ENCODE measurements at regions of chr2 and their contacts with region 1.

Region 1: GRCh38 chr2:25673300-25674076 is at the start of gene DTNB:
- DNase-seq: peak; percentile 89
- H3K4me3 ChIP-seq: peak within 1 kb of the TSS; percentile 80
- H3K27ac ChIP-seq: peak within 1 kb of the TSS; percentile 51
- H3K4me1 ChIP-seq: peaks cover 14% of the 10 kb centered on the region
- CTCF ChIP-seq: no peak
- total RNA-seq, gene DTNB: 9.3 and 16.1 TPM in 2 replicates

Region 2: DNA sequence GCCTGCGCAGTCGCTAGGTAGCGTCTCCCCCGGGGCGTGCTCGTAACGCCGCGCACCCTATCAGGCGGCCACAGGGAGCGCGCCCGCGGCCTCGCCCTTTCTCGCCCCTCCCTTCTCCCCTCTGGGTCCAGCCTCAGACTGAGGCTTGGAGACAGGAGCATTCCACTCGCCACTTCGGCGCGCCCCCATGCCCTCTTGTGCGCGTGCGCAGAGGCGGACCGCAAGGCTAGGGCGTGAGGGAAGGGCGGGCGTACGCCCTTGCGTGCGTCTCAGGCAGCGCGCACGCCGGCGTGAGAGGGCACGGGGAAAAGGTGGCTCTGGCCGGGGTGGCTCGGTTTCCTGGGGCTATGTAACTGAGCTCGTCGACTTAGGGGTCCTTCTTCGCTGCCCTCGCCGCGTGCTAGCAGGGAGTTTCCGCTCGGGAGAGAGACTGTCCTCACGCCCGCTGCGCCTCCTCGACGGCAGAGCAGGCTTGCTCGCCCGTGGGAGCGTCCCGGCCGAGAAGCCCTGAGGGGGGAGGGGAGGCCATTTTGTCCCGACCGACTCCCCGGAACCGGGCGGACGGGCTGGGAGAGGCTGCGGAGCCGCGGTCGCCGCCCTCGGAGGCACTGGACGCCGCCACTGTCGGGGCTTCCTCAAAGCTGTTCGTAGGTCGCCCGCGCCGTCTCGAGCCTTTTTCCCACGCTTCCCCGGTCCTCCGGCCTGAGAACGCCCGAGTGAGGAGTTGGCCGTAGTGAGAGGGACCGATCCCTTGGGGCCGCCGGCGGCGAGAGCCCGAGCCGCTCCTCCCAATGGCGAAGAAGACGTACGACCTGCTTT is 360.5 kb after region 1 on chr2 and contains the start of gene RAB10:
- CTCF ChIA-PET with region 1: no interaction called
- POLR2A ChIA-PET with region 1: no interaction called
- intact Hi-C with region 1: loop called (anchors 10 kb)
- DNase-seq: peak; percentile 99
- H3K4me3 ChIP-seq: peak within 1 kb of the TSS; percentile 95
- H3K27ac ChIP-seq: peak within 1 kb of the TSS; percentile 85
- H3K4me1 ChIP-seq: peaks cover 27% of the 10 kb centered on the region
- CTCF ChIP-seq: no peak
- total RNA-seq, gene RAB10: 58.3 and 109 TPM in 2 replicates

Region 3: DNA sequence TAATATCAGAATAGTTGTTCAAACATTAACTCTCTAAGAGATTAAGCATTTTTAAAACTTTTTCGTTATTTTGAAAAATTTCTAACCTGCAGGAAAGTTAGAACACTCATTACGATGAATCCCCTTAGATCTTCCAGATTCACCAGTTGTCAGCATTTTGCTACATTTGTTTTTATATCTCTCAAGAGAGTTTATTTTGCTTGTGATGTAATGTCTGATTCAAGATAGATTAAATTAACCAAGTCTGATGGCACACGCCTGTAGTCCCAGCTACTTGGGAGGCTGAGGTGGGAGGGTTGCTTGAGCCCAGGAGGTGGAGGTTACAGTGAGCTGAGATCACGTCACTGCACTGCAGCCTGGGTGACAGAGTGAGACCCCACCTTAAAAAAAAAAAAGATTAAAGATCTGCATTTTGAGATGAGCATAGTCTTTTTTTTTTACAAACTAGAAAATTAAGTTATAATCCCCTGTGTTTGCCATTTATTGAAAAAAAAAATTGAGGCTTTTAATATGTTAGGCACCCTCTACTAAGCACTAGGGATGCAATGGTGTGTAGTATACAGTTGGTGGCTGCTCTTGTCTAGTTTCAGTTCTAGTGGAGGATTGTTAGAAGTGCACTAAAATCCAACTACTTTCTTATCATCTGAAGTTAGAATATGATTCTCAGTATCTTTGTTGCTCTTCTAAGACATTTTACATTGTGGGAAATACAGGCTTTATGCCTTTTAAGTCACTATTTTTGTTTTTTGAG is 381.3 kb after region 1 on chr2:
- CTCF ChIA-PET with region 1: no interaction called
- POLR2A ChIA-PET with region 1: no interaction called
- intact Hi-C with region 1: no loop called
- DNase-seq: no peak
- H3K4me3 ChIP-seq: no peak overlapping the region
- H3K27ac ChIP-seq: no peak overlapping the region
- H3K4me1 ChIP-seq: peaks cover 3% of the 10 kb centered on the region
- CTCF ChIP-seq: no peak